ENCODE measurements at regions of chr12 and their contacts with region 1.

Region 1: GRCh38 chr12:43338848-43339526 is 213.0 kb downstream of the ADAMTS20 start:
- DNase-seq: peak; percentile 42
- ATAC-seq: peak; percentile 80
- H3K4me3 ChIP-seq: no peak overlapping the region
- H3K27ac ChIP-seq: no peak overlapping the region
- H3K4me1 ChIP-seq: peaks cover 15% of the 10 kb centered on the region
- H3K27me3 ChIP-seq: no peaks in the 10 kb centered on the region
- CTCF ChIP-seq: peak; percentile 56 to 70 (median 57)
- EP300 ChIP-seq: no peak
- POLR2A ChIP-seq: no peak
- RAD21 ChIP-seq: peak; percentile 82

Region 2: GRCh38 chr12:42277396-42278127 is 1061.4 kb before region 1 on chr12:
- CTCF ChIA-PET with region 1: no interaction called
- POLR2A ChIA-PET with region 1: no interaction called
- RAD21 ChIA-PET with region 1: no interaction called
- SMC1A ChIA-PET with region 1: no interaction called
- in situ Hi-C with region 1: no loop called
- intact Hi-C with region 1: no loop called
- DNase-seq: no peak
- ATAC-seq: no peak
- H3K4me3 ChIP-seq: no peak overlapping the region
- H3K27ac ChIP-seq: no peak overlapping the region
- H3K4me1 ChIP-seq: no peaks in the 10 kb centered on the region
- H3K27me3 ChIP-seq: no peaks in the 10 kb centered on the region
- CTCF ChIP-seq: no peak
- EP300 ChIP-seq: no peak
- POLR2A ChIP-seq: no peak
- RAD21 ChIP-seq: no peak

Region 3: DNA sequence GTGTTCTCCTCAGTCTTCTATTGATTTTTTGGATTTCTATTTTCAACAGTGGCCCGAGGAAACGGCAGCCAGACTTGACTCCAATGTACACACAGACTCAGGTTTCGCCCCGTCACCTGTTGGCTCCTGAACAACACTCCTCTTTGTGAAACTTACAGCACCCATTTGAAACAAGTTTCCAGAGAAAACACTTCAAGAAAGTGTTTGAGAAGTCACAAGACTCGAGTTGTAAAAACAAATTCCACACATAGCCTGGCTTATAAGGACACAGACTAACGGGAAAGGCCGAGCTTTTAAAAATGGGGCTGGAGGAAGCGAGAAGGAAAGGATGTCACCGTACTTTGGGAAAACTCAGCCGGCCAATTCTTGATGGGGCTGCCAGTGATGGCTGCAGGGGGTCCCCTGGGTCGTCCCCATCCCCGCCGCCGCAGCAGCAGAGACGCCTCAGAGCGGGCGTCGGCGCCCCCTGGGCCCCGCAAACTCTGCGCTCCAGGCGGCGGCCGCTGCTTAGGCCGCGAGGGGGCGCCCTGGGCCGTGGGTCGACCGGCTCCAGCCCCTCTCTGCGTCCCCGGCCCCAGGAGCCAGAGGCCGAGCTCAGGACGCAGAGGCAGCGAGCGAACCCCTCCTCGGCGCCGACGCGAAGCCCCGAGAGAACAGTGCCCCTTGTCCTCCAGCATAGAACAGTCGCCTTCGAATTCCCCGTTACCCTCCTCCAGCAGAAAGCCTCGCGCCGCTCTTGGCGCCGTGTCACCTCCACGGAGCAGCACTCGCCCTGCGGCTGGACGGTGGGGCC is 856.3 kb before region 1 on chr12:
- CTCF ChIA-PET with region 1: interaction called, 18 read pairs
- POLR2A ChIA-PET with region 1: no interaction called
- RAD21 ChIA-PET with region 1: interaction called, 24 read pairs
- SMC1A ChIA-PET with region 1: interaction called, 4 read pairs
- in situ Hi-C with region 1: loop called (anchors 5 kb)
- intact Hi-C with region 1: loop called (anchors 2 kb)
- DNase-seq: no peak
- ATAC-seq: peak; percentile 95
- H3K4me3 ChIP-seq: peak overlapping the region; percentile 73
- H3K27ac ChIP-seq: no peak overlapping the region
- H3K4me1 ChIP-seq: peaks cover 9% of the 10 kb centered on the region
- H3K27me3 ChIP-seq: peaks cover 0 to 6% of the 10 kb centered on the region in 2 experiments; a peak in 1 of 4 replicates
- CTCF ChIP-seq: peak; percentile 79 to 96 (median 82)
- EP300 ChIP-seq: no peak
- POLR2A ChIP-seq: no peak
- RAD21 ChIP-seq: peak; percentile 85

Region 4: DNA sequence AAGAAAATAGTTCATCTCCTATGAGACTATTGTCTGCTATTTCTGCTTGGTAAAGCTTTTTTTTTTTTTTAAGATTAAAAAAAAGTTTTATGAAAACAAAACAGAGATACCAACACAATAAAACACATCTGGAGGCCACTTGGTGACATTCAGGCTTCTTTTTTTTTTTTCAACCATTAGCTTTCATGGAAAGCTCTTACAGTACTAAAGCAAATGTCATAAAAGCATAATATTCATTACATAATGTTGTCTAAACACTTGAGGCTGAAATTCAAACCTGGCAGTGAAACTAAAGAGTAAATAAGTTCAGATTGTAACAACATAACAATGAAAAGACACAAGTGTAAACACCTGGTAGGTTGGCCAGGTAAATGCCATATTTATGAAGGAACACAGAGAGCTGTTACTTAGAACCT is 764.1 kb before region 1 on chr12:
- CTCF ChIA-PET with region 1: interaction called, 14 read pairs
- POLR2A ChIA-PET with region 1: no interaction called
- RAD21 ChIA-PET with region 1: interaction called, 3 read pairs
- SMC1A ChIA-PET with region 1: interaction called, 5 read pairs
- in situ Hi-C with region 1: no loop called
- intact Hi-C with region 1: loop called (anchors 5 kb)
- DNase-seq: no peak
- ATAC-seq: no peak
- H3K4me3 ChIP-seq: no peak overlapping the region
- H3K27ac ChIP-seq: no peak overlapping the region
- H3K4me1 ChIP-seq: no peaks in the 10 kb centered on the region; the same call in 1 of the 2 replicates
- H3K27me3 ChIP-seq: peaks cover 0 to 4% of the 10 kb centered on the region in 2 experiments; a peak in 1 of 4 replicates
- CTCF ChIP-seq: no peak
- EP300 ChIP-seq: no peak
- POLR2A ChIP-seq: no peak
- RAD21 ChIP-seq: no peak

Region 5: DNA sequence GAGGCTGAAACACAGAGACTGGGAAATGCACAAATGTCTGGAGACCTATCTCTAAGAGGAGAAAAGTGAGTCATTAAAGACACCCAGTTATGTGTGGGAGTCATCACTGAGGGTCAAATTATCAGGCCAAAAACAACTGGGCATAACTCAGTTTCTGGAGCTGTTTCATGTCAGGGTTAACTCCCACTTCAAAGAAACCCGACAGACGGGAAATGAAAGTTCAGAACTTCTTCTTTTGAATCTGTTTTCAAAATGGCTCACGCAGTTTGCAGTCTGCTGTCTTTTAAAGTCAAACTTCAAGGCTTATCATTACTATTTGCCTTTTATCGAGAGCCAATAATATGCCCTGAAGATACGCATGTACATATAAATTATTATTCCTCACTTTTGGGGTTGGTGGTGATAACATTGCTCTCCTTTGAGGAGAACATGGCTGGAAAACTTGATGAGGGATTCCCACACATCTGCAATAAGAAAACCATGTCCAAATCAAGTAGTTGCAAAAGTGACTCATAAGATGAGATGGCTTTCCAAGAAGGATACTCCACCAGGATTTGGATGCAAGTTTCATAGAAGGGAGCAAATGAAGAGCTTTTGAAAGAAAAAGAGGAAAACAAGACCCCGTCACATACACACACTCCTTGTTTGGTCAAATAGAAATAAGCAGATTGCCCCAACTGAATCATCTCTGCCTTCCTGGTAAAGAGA is 128.3 kb before region 1 on chr12:
- CTCF ChIA-PET with region 1: interaction called, 3 read pairs
- POLR2A ChIA-PET with region 1: no interaction called
- RAD21 ChIA-PET with region 1: interaction called, 4 read pairs
- SMC1A ChIA-PET with region 1: interaction called, 4 read pairs
- in situ Hi-C with region 1: no loop called
- intact Hi-C with region 1: loop called (anchors 5 kb)
- DNase-seq: peak; percentile 57
- ATAC-seq: peak; percentile 99
- H3K4me3 ChIP-seq: no peak overlapping the region
- H3K27ac ChIP-seq: no peak overlapping the region
- H3K4me1 ChIP-seq: peaks cover 9% of the 10 kb centered on the region; the same call in 1 of the 2 replicates
- H3K27me3 ChIP-seq: no peaks in the 10 kb centered on the region
- CTCF ChIP-seq: no peak
- EP300 ChIP-seq: peak; percentile 69 to 74; a peak in 2 of 4 replicates
- POLR2A ChIP-seq: no peak
- RAD21 ChIP-seq: no peak

Region 6: GRCh38 chr12:43425353-43425752 is 86.4 kb after region 1 on chr12:
- CTCF ChIA-PET with region 1: no interaction called
- POLR2A ChIA-PET with region 1: no interaction called
- RAD21 ChIA-PET with region 1: no interaction called
- SMC1A ChIA-PET with region 1: no interaction called
- in situ Hi-C with region 1: no loop called
- intact Hi-C with region 1: no loop called
- DNase-seq: no peak
- ATAC-seq: 0 out of 3 replicates have a peak, but pooled peaks have one; percentile 41
- H3K4me3 ChIP-seq: no peak overlapping the region
- H3K27ac ChIP-seq: no peak overlapping the region
- H3K4me1 ChIP-seq: no peaks in the 10 kb centered on the region
- H3K27me3 ChIP-seq: no peaks in the 10 kb centered on the region
- CTCF ChIP-seq: no peak
- EP300 ChIP-seq: no peak
- POLR2A ChIP-seq: no peak
- RAD21 ChIP-seq: no peak

Measured in GM12878 (cell line).